Naive thymus-derived CD4-positive, alpha-beta T cell (primary cell): ENCODE measurements at regions of chr17 and their contacts with region 1.

Region 1: GRCh38 chr17:76623271-76624146 is 20.0 kb downstream of the ST6GALNAC1 start:
- DNase-seq: peak; percentile 46 to 78 (median 70)
- ATAC-seq: peak; percentile 98
- H3K4me3 ChIP-seq: no peak overlapping the region
- H3K4me3 Mint-ChIP-seq: peak overlapping the region in 1 of 10 donors; percentile 23
- H3K27ac ChIP-seq: no peak overlapping the region
- H3K27ac Mint-ChIP-seq: no peak overlapping the region
- H3K4me1 ChIP-seq: peaks cover 0 to 3% of the 10 kb centered on the region in 2 donors
- H3K4me1 Mint-ChIP-seq: peaks cover 0 to 8% (median 5%) of the 10 kb centered on the region in 7 donors
- H3K27me3 ChIP-seq: no peaks in the 10 kb centered on the region
- H3K27me3 Mint-ChIP-seq: peaks cover 0 to 23% (median 0%) of the 10 kb centered on the region in 5 donors

Region 2: GRCh38 chr17:76408052-76408849 is 215.3 kb before region 1 on chr17:
- CTCF ChIA-PET with region 1: interaction called, 3 read pairs
- POLR2A ChIA-PET with region 1: no interaction called
- intact Hi-C with region 1: loop called (anchors 1 kb)
- DNase-seq: peak; percentile 48 to 72 (median 65)
- ATAC-seq: peak; percentile 89
- H3K4me3 ChIP-seq: no peak overlapping the region
- H3K4me3 Mint-ChIP-seq: no peak overlapping the region
- H3K27ac ChIP-seq: no peak overlapping the region
- H3K27ac Mint-ChIP-seq: peak overlapping the region in 6 of 9 donors; percentile 25 to 75 (median 61)
- H3K4me1 ChIP-seq: no peaks in the 10 kb centered on the region
- H3K4me1 Mint-ChIP-seq: peaks cover 9 to 14% (median 11%) of the 10 kb centered on the region in 7 donors
- H3K27me3 ChIP-seq: no peaks in the 10 kb centered on the region
- H3K27me3 Mint-ChIP-seq: no peaks in the 10 kb centered on the region

Region 3: DNA sequence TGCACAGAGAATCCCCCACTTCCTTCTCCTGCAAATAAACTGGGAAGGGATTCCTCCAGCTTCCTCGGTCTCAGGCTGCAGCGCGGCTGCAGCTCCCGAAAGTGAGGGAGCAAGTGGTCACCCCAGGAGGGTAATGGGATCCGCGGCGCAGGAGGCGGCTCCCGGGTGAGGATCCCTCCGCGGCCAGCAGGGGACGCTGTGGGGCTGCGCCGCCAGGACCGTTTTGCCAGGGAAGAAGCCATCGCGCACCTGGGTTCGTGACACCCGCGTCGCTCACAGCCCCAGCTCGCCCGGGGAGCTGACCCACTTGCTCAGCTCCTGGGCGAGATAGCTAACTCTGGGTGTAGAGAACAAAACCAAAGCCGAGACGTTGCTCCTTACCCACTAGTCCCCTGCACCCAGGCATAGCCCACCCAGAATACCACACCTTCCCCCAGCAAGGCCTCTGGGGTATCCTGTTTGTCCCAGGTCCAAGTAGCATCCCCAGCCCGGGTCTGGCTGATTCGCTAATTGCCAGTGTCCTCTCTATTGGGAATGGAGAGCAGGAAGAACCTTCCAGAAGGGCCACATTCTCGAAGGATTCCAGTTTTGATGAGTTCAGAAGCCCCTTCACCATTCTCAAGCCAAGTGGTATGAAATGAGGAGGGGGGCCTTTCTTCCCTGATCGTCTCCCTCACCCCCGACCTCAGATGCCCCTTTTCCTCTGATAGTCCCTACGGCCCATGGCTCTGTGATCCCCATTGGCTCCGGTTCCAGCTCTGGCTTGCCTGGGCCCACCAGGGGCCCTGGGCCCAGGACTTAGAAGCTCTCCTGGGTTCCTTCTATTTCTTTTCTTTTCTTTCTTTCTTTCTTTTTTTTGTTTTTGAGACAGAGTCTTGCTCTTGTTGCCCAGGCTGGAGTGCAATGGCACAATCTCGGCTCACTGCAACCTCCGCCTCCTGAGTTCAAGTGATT is 100.1 kb before region 1 on chr17:
- CTCF ChIA-PET with region 1: interaction called, 26 read pairs
- POLR2A ChIA-PET with region 1: interaction called, 3 read pairs
- intact Hi-C with region 1: loop called (anchors 1 kb)
- DNase-seq: peak; percentile 66 to 89 (median 79)
- ATAC-seq: peak; percentile 92
- H3K4me3 ChIP-seq: no peak overlapping the region
- H3K4me3 Mint-ChIP-seq: peak overlapping the region in 8 of 10 donors; percentile 10 to 71 (median 36)
- H3K27ac ChIP-seq: no peak overlapping the region
- H3K27ac Mint-ChIP-seq: peak overlapping the region in 8 of 9 donors; percentile 40 to 93 (median 72)
- H3K4me1 ChIP-seq: peaks cover 11 to 22% of the 10 kb centered on the region in 2 donors
- H3K4me1 Mint-ChIP-seq: peaks cover 16 to 31% (median 28%) of the 10 kb centered on the region in 7 donors
- H3K27me3 ChIP-seq: no peaks in the 10 kb centered on the region
- H3K27me3 Mint-ChIP-seq: peaks cover 0 to 11% (median 0%) of the 10 kb centered on the region in 5 donors

Region 4: GRCh38 chr17:76671123-76671911 is 47.8 kb after region 1 on chr17:
- CTCF ChIA-PET with region 1: interaction called, 7 read pairs
- POLR2A ChIA-PET with region 1: interaction called, 7 read pairs
- intact Hi-C with region 1: loop called in 1 of 2 experiments (anchors 2 kb)
- DNase-seq: peak; percentile 90 to 99 (median 98)
- ATAC-seq: peak; percentile 99
- H3K4me3 ChIP-seq: peak overlapping the region; percentile 76
- H3K4me3 Mint-ChIP-seq: peak overlapping the region; percentile 81 to 98 (median 92)
- H3K27ac ChIP-seq: peak overlapping the region; percentile 84
- H3K27ac Mint-ChIP-seq: peak overlapping the region; percentile 88 to 99 (median 96)
- H3K4me1 ChIP-seq: peaks cover 19 to 26% of the 10 kb centered on the region in 2 donors
- H3K4me1 Mint-ChIP-seq: peaks cover 20 to 43% (median 31%) of the 10 kb centered on the region in 7 donors
- H3K27me3 ChIP-seq: no peaks in the 10 kb centered on the region
- H3K27me3 Mint-ChIP-seq: peaks cover 0 to 10% (median 0%) of the 10 kb centered on the region in 5 donors

Region 5: GRCh38 chr17:76681222-76682137 is 58.0 kb after region 1 on chr17:
- CTCF ChIA-PET with region 1: interaction called, 23 read pairs
- POLR2A ChIA-PET with region 1: interaction called, 3 read pairs
- intact Hi-C with region 1: loop called in 1 of 2 experiments (anchors 1 kb)
- DNase-seq: peak; percentile 37 to 78 (median 67)
- ATAC-seq: peak; percentile 80
- H3K4me3 ChIP-seq: no peak overlapping the region
- H3K4me3 Mint-ChIP-seq: no peak overlapping the region
- H3K27ac ChIP-seq: no peak overlapping the region
- H3K27ac Mint-ChIP-seq: peak overlapping the region in 4 of 9 donors; percentile 18 to 74 (median 28)
- H3K4me1 ChIP-seq: peaks cover 14 to 25% of the 10 kb centered on the region in 2 donors
- H3K4me1 Mint-ChIP-seq: peaks cover 0 to 12% (median 5%) of the 10 kb centered on the region in 7 donors
- H3K27me3 ChIP-seq: no peaks in the 10 kb centered on the region
- H3K27me3 Mint-ChIP-seq: peaks cover 0 to 6% (median 0%) of the 10 kb centered on the region in 5 donors

Region 6: GRCh38 chr17:76805319-76805718 is 181.8 kb after region 1 on chr17:
- CTCF ChIA-PET with region 1: no interaction called
- POLR2A ChIA-PET with region 1: no interaction called
- intact Hi-C with region 1: no loop called
- DNase-seq: no peak
- ATAC-seq: no peak
- H3K4me3 ChIP-seq: no peak overlapping the region
- H3K4me3 Mint-ChIP-seq: no peak overlapping the region
- H3K27ac ChIP-seq: no peak overlapping the region
- H3K27ac Mint-ChIP-seq: no peak overlapping the region
- H3K4me1 ChIP-seq: no peaks in the 10 kb centered on the region
- H3K4me1 Mint-ChIP-seq: no peaks in the 10 kb centered on the region
- H3K27me3 ChIP-seq: no peaks in the 10 kb centered on the region
- H3K27me3 Mint-ChIP-seq: no peaks in the 10 kb centered on the region